ENCODE measurements at regions of chr11 and their contacts with region 1.

Region 1: GRCh38 chr11:6523253-6523652 is 26.2 kb downstream of the DNHD1 start:
- DNase-seq: no peak
- ATAC-seq: peak; percentile 86
- H3K4me3 Mint-ChIP-seq: no peak overlapping the region
- H3K27ac Mint-ChIP-seq: no peak overlapping the region
- H3K4me1 Mint-ChIP-seq: peaks cover 41% of the 10 kb centered on the region
- H3K27me3 Mint-ChIP-seq: no peaks in the 10 kb centered on the region

Region 2: DNA sequence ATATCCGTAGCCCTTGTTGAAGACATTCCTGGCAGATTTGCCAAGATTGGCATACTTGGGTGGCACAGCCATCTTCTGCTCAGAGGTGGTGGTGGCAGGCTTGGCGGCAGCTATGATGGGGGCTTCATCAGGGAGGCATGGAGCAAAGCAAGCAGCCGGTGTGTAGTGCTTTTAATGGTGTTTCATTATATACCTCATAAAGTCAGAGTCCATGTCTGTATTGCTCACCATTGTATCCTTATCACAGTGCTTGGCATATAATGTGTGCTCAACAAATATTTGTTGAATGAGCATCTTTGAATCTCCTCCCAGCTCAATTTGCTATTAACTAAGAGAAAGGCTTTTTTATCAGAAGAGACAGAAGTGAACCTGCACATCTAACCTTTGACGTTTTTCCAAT is 33.9 kb before region 1 on chr11:
- CTCF ChIA-PET with region 1: interaction called, 3 read pairs
- POLR2A ChIA-PET with region 1: no interaction called
- intact Hi-C with region 1: loop called in 1 of 2 experiments (anchors 2 kb)
- DNase-seq: no peak
- ATAC-seq: no peak
- H3K4me3 Mint-ChIP-seq: no peak overlapping the region
- H3K27ac Mint-ChIP-seq: no peak overlapping the region
- H3K4me1 Mint-ChIP-seq: peaks cover 2% of the 10 kb centered on the region
- H3K27me3 Mint-ChIP-seq: no peaks in the 10 kb centered on the region

Region 3: GRCh38 chr11:6855971-6856541 is 332.8 kb after region 1 on chr11:
- CTCF ChIA-PET with region 1: no interaction called
- POLR2A ChIA-PET with region 1: no interaction called
- intact Hi-C with region 1: loop called in 1 of 2 experiments (anchors 10 kb)
- DNase-seq: no peak
- ATAC-seq: no peak
- H3K4me3 Mint-ChIP-seq: no peak overlapping the region
- H3K27ac Mint-ChIP-seq: no peak overlapping the region
- H3K4me1 Mint-ChIP-seq: peaks cover 10% of the 10 kb centered on the region
- H3K27me3 Mint-ChIP-seq: peaks cover 14% of the 10 kb centered on the region

Measured in activated CD4-positive, alpha-beta T cell treated with anti-CD3 and anti-CD28 coated beads for 36 hours (primary cell).